Posterior cingulate gyrus (tissue), 11 donors: ENCODE measurements at regions of chr15 and their contacts with region 1.

Region 1: GRCh38 chr15:94324117-94324826 is 92.9 kb downstream of the MCTP2 start:
- DNase-seq: peak in 5 of 10 donors; percentile 31 to 85 (median 38)

Region 2: GRCh38 chr15:94163999-94164807 is 160.1 kb before region 1 on chr15:
- intact Hi-C with region 1: loop called (anchors 2 kb)
- DNase-seq: peak in 5 of 10 donors; percentile 11 to 46 (median 37)